CD4-positive, alpha-beta memory T cell (primary cell): ENCODE measurements at regions of chr15 and their contacts with region 1.

Region 1: GRCh38 chr15:99928429-99928981 is 195.3 kb upstream of the LYSMD4 start:
- DNase-seq: peak; percentile 79 to 90 (median 88)
- H3K4me3 ChIP-seq: peak overlapping the region; percentile 74 to 78
- H3K4me3 Mint-ChIP-seq: peak overlapping the region; percentile 88 to 94 (median 90)
- H3K27ac ChIP-seq: peak overlapping the region; percentile 62
- H3K27ac Mint-ChIP-seq: peak overlapping the region; percentile 88 to 97 (median 93)
- H3K4me1 ChIP-seq: peaks cover 18% of the 10 kb centered on the region
- H3K4me1 Mint-ChIP-seq: peaks cover 9 to 27% (median 17%) of the 10 kb centered on the region in 4 donors
- H3K27me3 ChIP-seq: no peaks in the 10 kb centered on the region
- H3K27me3 Mint-ChIP-seq: peaks cover 2 to 4% of the 10 kb centered on the region in 2 donors

Region 2: DNA sequence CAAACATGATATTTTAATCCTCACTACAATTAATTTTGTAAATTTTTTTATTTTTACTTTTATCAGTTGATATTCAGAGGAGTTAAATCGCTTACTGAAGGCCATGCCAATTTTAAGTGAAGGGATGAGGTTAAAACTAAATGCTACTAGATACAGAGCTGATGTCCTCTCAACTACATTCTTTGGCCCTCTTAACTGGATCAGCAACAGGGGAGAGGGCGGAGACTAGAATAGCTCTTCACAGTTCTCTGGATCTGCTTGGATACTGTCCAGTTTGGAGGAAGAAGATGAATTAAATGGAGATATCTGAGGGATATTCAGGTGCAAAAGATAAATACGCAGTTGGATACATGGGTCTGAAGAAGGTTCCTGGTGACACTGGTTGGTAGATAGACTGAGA is 109.6 kb before region 1 on chr15:
- CTCF ChIA-PET with region 1: no interaction called
- POLR2A ChIA-PET with region 1: interaction called, 3 read pairs
- intact Hi-C with region 1: loop called (anchors 10 kb)
- DNase-seq: no peak
- H3K4me3 ChIP-seq: no peak overlapping the region
- H3K4me3 Mint-ChIP-seq: no peak overlapping the region
- H3K27ac ChIP-seq: no peak overlapping the region
- H3K27ac Mint-ChIP-seq: no peak overlapping the region
- H3K4me1 ChIP-seq: no peaks in the 10 kb centered on the region
- H3K4me1 Mint-ChIP-seq: peaks cover 0 to 2% (median 0%) of the 10 kb centered on the region in 4 donors
- H3K27me3 ChIP-seq: no peaks in the 10 kb centered on the region
- H3K27me3 Mint-ChIP-seq: no peaks in the 10 kb centered on the region

Region 3: GRCh38 chr15:100341662-100342560 is 413.4 kb after region 1 on chr15 and contains the start of gene ADAMTS17:
- CTCF ChIA-PET with region 1: interaction called, 77 read pairs
- POLR2A ChIA-PET with region 1: interaction called, 24 read pairs
- intact Hi-C with region 1: loop called (anchors 2 kb)
- DNase-seq: peak; percentile 94 to 97 (median 95)
- H3K4me3 ChIP-seq: peak within 1 kb of the TSS in 1 of 2 donors; percentile 79
- H3K4me3 Mint-ChIP-seq: peak within 1 kb of the TSS; percentile 57 to 86 (median 75)
- H3K27ac ChIP-seq: peak within 1 kb of the TSS; percentile 43
- H3K27ac Mint-ChIP-seq: peak within 1 kb of the TSS; percentile 29 to 87 (median 77)
- H3K4me1 ChIP-seq: peaks cover 22% of the 10 kb centered on the region
- H3K4me1 Mint-ChIP-seq: peaks cover 13 to 34% (median 15%) of the 10 kb centered on the region in 4 donors
- H3K27me3 ChIP-seq: no peaks in the 10 kb centered on the region
- H3K27me3 Mint-ChIP-seq: no peaks in the 10 kb centered on the region
- total RNA-seq, gene ADAMTS17: 4.7 to 6.2 TPM

Region 4: DNA sequence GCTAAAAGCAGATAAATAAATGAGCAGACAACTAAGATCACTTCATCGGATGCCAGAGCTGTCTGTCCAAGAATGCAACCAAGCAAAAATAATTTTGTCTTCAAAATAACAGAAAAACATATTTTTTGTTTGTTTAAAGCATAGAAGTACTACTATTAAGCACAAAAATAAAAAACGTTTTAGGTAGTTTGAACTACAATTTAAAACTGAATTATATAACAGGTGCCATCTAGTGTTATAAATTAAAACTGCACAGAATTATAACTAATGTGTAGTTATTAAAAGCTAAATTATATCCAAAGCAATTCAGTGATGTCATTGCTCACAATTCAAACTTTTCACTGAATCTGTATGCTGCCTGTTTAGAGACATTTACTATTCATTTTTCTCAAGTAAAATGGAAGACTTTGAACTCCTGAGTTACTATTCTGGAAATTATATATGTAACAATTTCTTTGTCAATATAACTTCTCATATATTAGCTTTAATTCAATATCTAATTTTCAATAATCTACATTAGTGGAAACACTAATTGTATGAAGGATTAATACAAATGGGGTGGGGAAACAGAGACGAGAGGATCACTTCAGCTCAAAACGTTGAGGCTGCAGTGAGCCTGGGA is 644.0 kb after region 1 on chr15:
- CTCF ChIA-PET with region 1: interaction called, 4 read pairs
- POLR2A ChIA-PET with region 1: no interaction called
- intact Hi-C with region 1: loop called (anchors 2 kb)
- DNase-seq: peak in 4 of 5 donors; percentile 35 to 41 (median 36)
- H3K4me3 ChIP-seq: no peak overlapping the region
- H3K4me3 Mint-ChIP-seq: peak overlapping the region in 7 of 8 donors; percentile 77 to 88 (median 84)
- H3K27ac ChIP-seq: peak overlapping the region; percentile 37
- H3K27ac Mint-ChIP-seq: peak overlapping the region in 5 of 7 donors; percentile 81 to 95 (median 94)
- H3K4me1 ChIP-seq: peaks cover 31% of the 10 kb centered on the region
- H3K4me1 Mint-ChIP-seq: peaks cover 32 to 58% (median 42%) of the 10 kb centered on the region in 4 donors
- H3K27me3 ChIP-seq: no peaks in the 10 kb centered on the region
- H3K27me3 Mint-ChIP-seq: no peaks in the 10 kb centered on the region

Region 5: DNA sequence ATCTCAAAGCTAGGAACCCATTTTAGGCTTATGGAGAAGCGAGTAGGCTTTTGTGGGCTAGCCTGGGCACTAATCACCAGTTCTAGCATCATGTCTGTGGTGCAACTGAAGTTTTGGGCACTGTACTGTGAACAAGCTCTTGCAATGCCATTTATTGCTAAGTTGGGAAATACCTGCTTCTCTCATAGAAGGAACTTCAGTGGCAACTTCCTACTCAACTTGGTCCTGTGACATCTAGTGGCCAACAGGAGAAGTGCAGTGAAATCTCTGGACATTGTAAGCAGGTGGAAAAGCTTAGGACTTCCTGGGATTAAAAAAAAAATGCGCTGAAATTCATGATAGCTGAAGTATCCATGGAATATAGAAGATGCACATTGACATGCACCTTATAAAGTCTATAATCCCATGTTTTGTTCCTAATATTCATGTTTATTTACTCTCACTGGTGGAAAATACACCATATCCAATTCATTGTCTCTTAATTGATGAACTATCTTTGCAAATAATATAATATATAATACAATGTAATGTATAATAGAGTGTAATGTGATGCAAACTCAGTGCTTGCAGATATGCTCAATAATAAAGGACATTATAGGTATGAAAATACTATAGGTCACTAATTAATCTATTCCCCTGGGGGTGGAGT is 944.6 kb after region 1 on chr15:
- CTCF ChIA-PET with region 1: no interaction called
- POLR2A ChIA-PET with region 1: no interaction called
- intact Hi-C with region 1: loop called (anchors 2 kb)
- DNase-seq: peak; percentile 39 to 52 (median 51)
- H3K4me3 ChIP-seq: no peak overlapping the region
- H3K4me3 Mint-ChIP-seq: no peak overlapping the region
- H3K27ac ChIP-seq: no peak overlapping the region
- H3K27ac Mint-ChIP-seq: no peak overlapping the region
- H3K4me1 ChIP-seq: no peaks in the 10 kb centered on the region
- H3K4me1 Mint-ChIP-seq: peaks cover 0 to 1% (median under 1%) of the 10 kb centered on the region in 4 donors
- H3K27me3 ChIP-seq: no peaks in the 10 kb centered on the region
- H3K27me3 Mint-ChIP-seq: peaks cover 9 to 21% of the 10 kb centered on the region in 2 donors